WTC11 (cell line): ENCODE measurements at regions of chr5 and their contacts with region 1.

Region 1: DNA sequence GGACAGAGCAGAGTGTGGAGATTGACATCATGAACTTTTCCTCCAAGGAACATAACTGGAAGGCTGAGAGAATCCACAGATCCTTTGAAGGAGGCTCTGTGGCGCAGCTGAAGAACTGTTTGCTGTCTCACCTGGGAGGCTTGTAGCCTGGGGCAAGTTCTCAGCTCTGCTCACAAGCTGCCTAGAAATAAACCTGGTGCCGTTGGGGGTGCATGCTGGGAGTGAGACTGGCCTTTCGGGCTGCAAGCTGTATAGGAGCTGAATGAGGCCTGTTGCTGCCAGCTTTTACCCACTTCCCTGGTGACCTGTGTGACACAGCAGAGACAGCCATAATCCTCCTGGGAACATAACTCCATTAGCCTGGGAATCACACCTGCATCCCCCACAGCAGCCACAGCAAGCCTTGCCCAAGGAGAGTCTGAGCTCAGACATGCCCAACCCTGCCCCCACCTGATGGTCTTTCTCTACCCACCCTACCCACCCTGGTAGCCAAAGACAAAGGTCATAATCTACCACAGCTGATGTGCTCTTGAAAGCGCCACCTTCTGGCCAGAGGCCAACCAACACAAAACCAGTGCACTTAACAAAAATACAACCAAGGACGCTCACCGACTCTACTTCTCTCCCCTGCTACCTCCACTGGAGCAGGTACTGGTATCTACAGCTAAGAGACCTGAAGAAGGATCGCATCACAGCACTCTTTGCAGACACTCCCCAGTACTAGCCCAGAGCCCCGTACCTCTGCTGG is 205.0 kb upstream of the MRPS30 start:
- DNase-seq: peak; percentile 60
- ATAC-seq: peak; percentile 85
- H3K4me3 Mint-ChIP-seq: no peak overlapping the region
- H3K27ac Mint-ChIP-seq: no peak overlapping the region
- H3K4me1 Mint-ChIP-seq: peaks cover 3% of the 10 kb centered on the region; the same call in 1 of the 2 replicates
- H3K27me3 Mint-ChIP-seq: no peaks in the 10 kb centered on the region
- CTCF ChIP-seq: peak; percentile 44

Region 2: DNA sequence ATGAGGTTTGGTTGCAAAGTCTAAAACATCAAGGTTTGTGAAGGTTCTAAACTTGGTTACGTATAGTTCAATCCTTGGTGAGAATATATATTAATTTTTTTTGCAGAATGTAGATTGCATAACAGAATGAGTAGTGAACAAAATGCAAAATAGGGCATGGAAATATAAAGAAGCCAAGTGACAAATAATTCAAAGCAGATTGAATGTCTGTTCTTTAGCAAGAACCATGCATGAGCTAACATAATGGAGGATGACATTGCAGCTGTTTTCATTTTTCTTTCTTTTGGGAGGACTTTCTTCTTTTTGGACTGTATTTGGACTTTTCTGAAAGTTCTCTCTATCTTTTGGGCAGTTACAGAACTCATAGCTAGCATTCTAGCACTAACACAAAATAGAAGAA is 10.2 kb after region 1 on chr5:
- CTCF ChIA-PET with region 1: interaction called, 10 read pairs
- POLR2A ChIA-PET with region 1: no interaction called
- DNase-seq: no peak
- ATAC-seq: no peak
- H3K4me3 Mint-ChIP-seq: no peak overlapping the region
- H3K27ac Mint-ChIP-seq: no peak overlapping the region
- H3K4me1 Mint-ChIP-seq: no peaks in the 10 kb centered on the region
- H3K27me3 Mint-ChIP-seq: no peaks in the 10 kb centered on the region
- CTCF ChIP-seq: no peak